ENCODE measurements at regions of chr16 and their contacts with region 1.

Region 1: DNA sequence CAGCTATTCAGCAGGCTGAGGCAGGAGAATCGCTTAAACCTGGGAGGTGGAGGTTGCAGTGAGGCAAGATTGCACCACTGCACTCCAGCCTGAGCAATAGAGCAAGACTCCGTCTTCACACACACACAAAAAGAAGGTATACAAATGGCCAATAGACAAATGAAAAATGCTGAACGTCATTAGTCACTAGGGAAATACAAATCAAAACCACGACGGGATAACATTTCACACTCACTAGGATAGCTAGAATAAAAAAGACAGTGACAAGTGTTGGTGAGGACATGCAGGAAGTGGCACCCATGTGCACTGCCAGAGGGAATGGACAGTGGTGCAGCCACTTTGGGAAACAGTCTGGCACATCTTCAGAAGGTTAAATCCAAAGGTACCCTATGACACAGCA is 172.9 kb downstream of the FTO start:
- DNase-seq: no peak
- ATAC-seq: no peak
- H3K4me3 ChIP-seq: no peak overlapping the region
- H3K27ac ChIP-seq: no peak overlapping the region
- H3K4me1 ChIP-seq: no peaks in the 10 kb centered on the region
- H3K27me3 ChIP-seq: no peaks in the 10 kb centered on the region
- CTCF ChIP-seq: no peak
- POLR2A ChIP-seq: no peak
- RAD21 ChIP-seq: no peak

Region 2: DNA sequence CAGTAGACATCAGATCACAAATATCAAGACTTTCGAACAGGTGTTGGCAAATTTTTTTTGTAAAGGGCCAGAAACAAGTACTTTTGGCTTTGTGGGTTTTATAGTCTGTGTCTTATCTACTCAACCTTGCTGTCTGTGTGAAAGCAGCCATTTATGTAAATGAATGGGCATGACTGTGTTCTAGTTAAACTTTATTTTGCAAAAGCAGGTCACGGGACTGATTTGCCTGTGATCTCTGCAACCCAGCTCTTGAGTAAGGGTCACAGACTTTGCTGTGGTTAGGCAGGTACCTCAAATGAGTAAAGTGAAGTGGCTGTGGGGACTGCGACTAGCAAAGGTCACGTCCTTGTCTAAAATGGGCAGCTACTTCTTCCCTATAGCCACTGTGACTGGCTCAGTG is 36.4 kb before region 1 on chr16:
- CTCF ChIA-PET with region 1: interaction called, 4 read pairs
- POLR2A ChIA-PET with region 1: no interaction called
- dilution Hi-C with region 1: no loop called
- in situ Hi-C with region 1: no loop called
- intact Hi-C with region 1: loop called (anchors 5 kb)
- DNase-seq: no peak
- ATAC-seq: no peak
- H3K4me3 ChIP-seq: no peak overlapping the region
- H3K27ac ChIP-seq: no peak overlapping the region
- H3K4me1 ChIP-seq: peaks cover 9% of the 10 kb centered on the region
- H3K27me3 ChIP-seq: no peaks in the 10 kb centered on the region
- CTCF ChIP-seq: no peak
- POLR2A ChIP-seq: no peak
- RAD21 ChIP-seq: no peak

Region 3: DNA sequence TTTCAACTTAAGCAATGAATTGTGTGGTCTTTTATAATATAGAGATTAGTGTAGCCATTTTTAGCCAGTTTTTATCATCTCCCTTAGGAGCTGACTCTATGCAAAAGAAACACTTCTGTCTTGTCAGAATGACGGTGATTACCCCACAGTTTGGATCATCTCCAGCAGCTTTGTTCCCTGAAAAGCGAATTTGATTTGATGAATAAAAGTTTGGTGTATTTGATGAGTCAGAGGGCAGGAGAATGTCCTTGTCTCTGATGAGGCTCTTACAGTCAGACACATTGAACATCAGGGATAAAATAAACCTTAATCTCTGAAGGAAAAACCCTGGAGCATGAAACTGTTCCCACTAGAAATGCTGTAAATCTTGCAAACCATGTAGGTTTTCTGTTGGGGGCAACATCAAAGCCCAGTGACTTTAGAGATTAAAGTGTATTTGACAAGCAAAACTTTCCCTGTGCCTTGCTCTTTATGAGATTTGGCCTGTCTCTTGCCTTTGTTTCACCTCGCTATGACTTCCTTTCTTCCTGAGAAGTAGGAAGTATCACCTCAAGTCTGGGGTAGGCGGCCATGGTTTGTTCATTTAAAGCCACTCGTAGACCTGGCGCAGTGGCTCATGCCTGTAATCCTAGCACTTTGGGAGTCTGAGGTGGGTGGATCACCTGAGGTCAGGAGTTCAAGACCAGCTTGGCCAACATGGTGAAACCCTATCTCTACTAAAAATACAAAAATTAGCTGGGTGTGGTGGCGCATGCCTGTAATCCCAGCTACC is 36.5 kb after region 1 on chr16:
- CTCF ChIA-PET with region 1: no interaction called
- POLR2A ChIA-PET with region 1: no interaction called
- dilution Hi-C with region 1: no loop called
- in situ Hi-C with region 1: no loop called
- intact Hi-C with region 1: no loop called
- DNase-seq: peak; percentile 94
- ATAC-seq: peak; percentile 56
- H3K4me3 ChIP-seq: no peak overlapping the region
- H3K27ac ChIP-seq: no peak overlapping the region
- H3K4me1 ChIP-seq: peaks cover 15% of the 10 kb centered on the region
- H3K27me3 ChIP-seq: no peaks in the 10 kb centered on the region
- CTCF ChIP-seq: no peak
- POLR2A ChIP-seq: no peak
- RAD21 ChIP-seq: no peak

Region 4: DNA sequence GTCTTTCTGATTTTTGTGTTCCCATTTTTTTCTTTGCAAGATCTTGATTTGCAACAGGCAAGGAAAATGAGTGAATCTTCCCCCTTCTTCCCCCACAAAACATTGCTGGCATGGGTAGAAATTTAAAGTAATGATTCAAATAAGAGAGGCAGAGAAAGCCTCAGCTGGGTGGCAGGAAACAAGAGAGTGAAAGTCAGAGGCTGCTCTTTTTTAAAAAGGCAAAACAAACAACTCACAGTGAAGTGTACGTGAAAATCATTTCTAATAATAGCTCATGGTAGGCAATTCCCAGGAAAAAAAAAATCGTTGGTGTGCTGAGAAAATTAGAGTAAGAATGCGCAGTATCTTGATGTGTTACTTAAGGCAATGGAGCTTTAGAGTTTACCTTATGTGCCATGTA is 56.6 kb after region 1 on chr16:
- CTCF ChIA-PET with region 1: no interaction called
- POLR2A ChIA-PET with region 1: no interaction called
- dilution Hi-C with region 1: no loop called
- in situ Hi-C with region 1: no loop called
- intact Hi-C with region 1: no loop called
- DNase-seq: no peak
- ATAC-seq: no peak
- H3K4me3 ChIP-seq: no peak overlapping the region
- H3K27ac ChIP-seq: no peak overlapping the region
- H3K4me1 ChIP-seq: no peaks in the 10 kb centered on the region
- H3K27me3 ChIP-seq: no peaks in the 10 kb centered on the region
- CTCF ChIP-seq: no peak
- POLR2A ChIP-seq: no peak
- RAD21 ChIP-seq: no peak